ENCODE measurements at regions of chr9 and their contacts with region 1.

Region 1: DNA sequence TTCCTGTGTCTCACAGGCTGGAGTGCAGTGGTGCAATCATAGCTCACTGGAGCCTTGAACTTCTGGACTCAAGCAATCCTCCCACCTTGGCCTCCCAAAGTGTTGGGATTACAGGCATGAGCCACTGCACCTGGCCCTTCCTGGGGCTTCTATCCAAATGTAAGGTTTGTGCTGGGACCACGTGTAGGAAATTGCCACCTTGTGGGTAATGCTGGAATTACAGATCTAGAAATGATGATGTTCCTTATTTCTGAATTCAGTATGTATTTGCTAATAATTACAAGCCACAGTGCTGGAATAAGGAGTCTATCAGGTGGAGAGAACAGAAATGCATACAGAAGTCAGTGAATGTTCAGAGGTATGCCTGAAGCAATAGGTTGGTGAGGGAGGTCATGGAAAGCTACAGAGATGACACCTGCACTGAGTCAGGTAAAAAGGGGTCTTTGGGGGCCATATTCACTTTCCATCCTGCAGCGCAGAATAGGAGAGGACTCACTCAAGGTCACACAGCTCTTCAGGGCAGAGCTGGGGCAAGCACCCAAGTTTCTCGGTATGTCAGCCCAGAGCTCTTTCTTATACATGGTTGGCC is 8.8 kb upstream of the IGFBPL1 start:
- DNase-seq: peak in 1 of 2 donors; percentile 44
- H3K4me3 ChIP-seq: no peak overlapping the region
- H3K27ac ChIP-seq: no peak overlapping the region
- H3K4me1 ChIP-seq: no peaks in the 10 kb centered on the region
- H3K27me3 ChIP-seq: no peaks in the 10 kb centered on the region
- CTCF ChIP-seq: peak in 1 of 3 experiments; percentile 29
- POLR2A ChIP-seq: no peak

Region 2: GRCh38 chr9:37913480-37914153 is 519.4 kb before region 1 on chr9:
- intact Hi-C with region 1: loop called (anchors 10 kb)
- DNase-seq: peak in 1 of 2 donors; percentile 91
- H3K4me3 ChIP-seq: no peak overlapping the region
- H3K27ac ChIP-seq: no peak overlapping the region
- H3K4me1 ChIP-seq: peaks cover 5% of the 10 kb centered on the region
- H3K27me3 ChIP-seq: no peaks in the 10 kb centered on the region
- CTCF ChIP-seq: peak; percentile 91 to 94 (median 91)
- POLR2A ChIP-seq: no peak

Region 3: DNA sequence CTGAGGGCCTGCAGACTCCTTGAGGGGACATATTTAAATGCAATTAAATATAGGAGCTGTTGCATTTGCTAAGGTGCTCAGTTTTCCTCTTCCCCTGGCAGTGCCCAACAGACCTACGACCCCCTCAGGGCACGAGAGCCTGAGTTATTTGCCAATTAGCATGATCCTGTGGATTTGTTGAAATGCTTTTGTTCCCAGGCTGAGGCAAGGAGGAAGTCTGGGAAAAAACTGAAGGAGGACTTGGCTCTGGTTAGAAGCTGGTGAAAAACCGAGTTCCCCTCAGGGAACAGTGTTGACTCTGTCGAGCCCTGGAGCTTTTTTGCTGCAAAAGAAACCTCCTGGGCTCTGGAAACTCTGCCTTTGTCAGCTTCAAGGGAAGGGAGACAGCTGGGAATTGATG is 260.4 kb before region 1 on chr9:
- intact Hi-C with region 1: no loop called
- DNase-seq: no peak
- H3K4me3 ChIP-seq: no peak overlapping the region
- H3K27ac ChIP-seq: no peak overlapping the region
- H3K4me1 ChIP-seq: no peaks in the 10 kb centered on the region
- H3K27me3 ChIP-seq: no peaks in the 10 kb centered on the region
- CTCF ChIP-seq: no peak
- POLR2A ChIP-seq: no peak